IMR-90 (cell line): ENCODE measurements at regions of chr17 and their contacts with region 1.

Region 1: GRCh38 chr17:38451840-38452529 is 23.7 kb downstream of the ARHGAP23 start:
- DNase-seq: peak; percentile 94
- ATAC-seq: peak; percentile 36
- H3K4me3 ChIP-seq: peak overlapping the region; percentile 30
- H3K27ac ChIP-seq: peak overlapping the region; percentile 99
- H3K4me1 ChIP-seq: peaks cover 65% of the 10 kb centered on the region
- H3K27me3 ChIP-seq: no peaks in the 10 kb centered on the region
- CTCF ChIP-seq: no peak
- POLR2A ChIP-seq: no peak
- RAD21 ChIP-seq: no peak

Region 2: GRCh38 chr17:37438141-37438540 is 1013.8 kb before region 1 on chr17:
- CTCF ChIA-PET with region 1: no interaction called
- POLR2A ChIA-PET with region 1: no interaction called
- dilution Hi-C with region 1: no loop called
- in situ Hi-C with region 1: no loop called
- intact Hi-C with region 1: no loop called
- DNase-seq: no peak
- ATAC-seq: no peak
- H3K4me3 ChIP-seq: no peak overlapping the region
- H3K27ac ChIP-seq: no peak overlapping the region
- H3K4me1 ChIP-seq: peaks cover 4% of the 10 kb centered on the region
- H3K27me3 ChIP-seq: no peaks in the 10 kb centered on the region
- CTCF ChIP-seq: 0 out of 2 replicates have a peak, but pooled peaks have one; percentile 8
- POLR2A ChIP-seq: no peak
- RAD21 ChIP-seq: no peak

Region 3: GRCh38 chr17:38428112-38428642 is 23.8 kb before region 1 on chr17 and contains the start of gene ARHGAP23:
- CTCF ChIA-PET with region 1: interaction called, 3 read pairs
- POLR2A ChIA-PET with region 1: no interaction called
- dilution Hi-C with region 1: no loop called
- in situ Hi-C with region 1: no loop called
- intact Hi-C with region 1: loop called (anchors 2 kb)
- DNase-seq: peak; percentile 72
- ATAC-seq: peak; percentile 69
- H3K4me3 ChIP-seq: peak within 1 kb of the TSS; percentile 96
- H3K27ac ChIP-seq: peak within 1 kb of the TSS; percentile 96
- H3K4me1 ChIP-seq: peaks cover 38% of the 10 kb centered on the region
- H3K27me3 ChIP-seq: no peaks in the 10 kb centered on the region
- CTCF ChIP-seq: no peak
- POLR2A ChIP-seq: 0 out of 2 replicates have a peak, but pooled peaks have one; percentile 24
- RAD21 ChIP-seq: no peak
- total RNA-seq, gene ARHGAP23: 9.3 and 17.8 TPM in 2 replicates

Region 4: GRCh38 chr17:38464723-38465390 is 12.9 kb after region 1 on chr17:
- CTCF ChIA-PET with region 1: interaction called, 6 read pairs
- POLR2A ChIA-PET with region 1: interaction called, 4 read pairs
- dilution Hi-C with region 1: no loop called
- in situ Hi-C with region 1: no loop called
- intact Hi-C with region 1: loop called (anchors 2 kb)
- DNase-seq: peak; percentile 94
- ATAC-seq: peak; percentile 92
- H3K4me3 ChIP-seq: peak overlapping the region; percentile 54
- H3K27ac ChIP-seq: peak overlapping the region; percentile 97
- H3K4me1 ChIP-seq: peaks cover 26% of the 10 kb centered on the region
- H3K27me3 ChIP-seq: no peaks in the 10 kb centered on the region
- CTCF ChIP-seq: no peak
- POLR2A ChIP-seq: peak; percentile 76
- RAD21 ChIP-seq: no peak